ENCODE measurements at regions of chr17 and their contacts with region 1.

Region 1: GRCh38 chr17:55527540-55528118 is 16.4 kb upstream of the SMIM36 start:
- DNase-seq: no peak
- ATAC-seq: peak; percentile 82 to 85

Region 2: GRCh38 chr17:54932711-54933110 is 594.9 kb before region 1 on chr17:
- intact Hi-C with region 1: no loop called
- DNase-seq: no peak
- ATAC-seq: no peak

Region 3: DNA sequence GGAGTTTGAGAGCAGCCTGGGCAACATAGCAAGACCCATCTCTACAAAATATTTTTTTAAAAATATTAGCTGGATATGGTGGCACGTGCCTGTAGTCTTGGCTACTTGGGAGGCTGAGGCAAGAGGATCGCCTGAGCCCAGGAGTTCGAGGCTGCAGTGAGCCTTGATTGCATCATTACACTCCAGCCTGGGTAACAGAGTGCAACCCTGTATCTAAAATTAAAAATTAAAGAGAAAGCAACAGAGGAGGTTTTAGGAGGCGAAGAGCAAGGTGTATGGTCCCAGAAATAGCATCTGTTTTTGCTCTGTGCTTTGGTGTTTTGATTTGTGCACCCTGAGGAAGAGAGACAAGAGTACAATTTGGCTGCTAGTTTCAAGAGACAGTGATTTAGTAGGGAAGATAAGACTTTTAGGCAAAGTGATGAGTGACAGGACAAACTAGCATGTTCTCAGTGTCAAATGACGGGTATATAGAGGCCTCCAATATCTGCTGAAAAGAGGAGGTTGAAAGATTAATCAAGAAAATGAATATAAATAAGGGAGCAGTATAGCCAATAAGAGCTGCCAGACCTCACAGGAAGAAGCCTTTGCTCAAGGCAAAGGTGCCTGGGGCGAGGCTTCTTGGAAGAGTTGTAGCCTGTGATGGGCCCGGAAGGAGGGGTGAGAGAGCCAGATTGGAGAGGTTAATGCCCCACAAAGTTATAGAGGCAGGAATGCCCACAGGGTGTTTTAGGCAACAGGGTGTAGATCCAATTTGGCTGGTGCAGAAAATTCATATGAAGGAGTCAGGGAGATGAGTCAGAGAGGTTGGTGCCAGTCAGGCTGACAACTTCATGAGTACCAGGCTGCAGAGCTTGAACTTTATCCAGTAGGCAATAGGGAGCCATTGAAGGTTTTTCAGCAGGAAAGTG is 251.5 kb before region 1 on chr17:
- intact Hi-C with region 1: no loop called
- DNase-seq: no peak
- ATAC-seq: peak in 1 of 2 donors; percentile 85

Region 4: DNA sequence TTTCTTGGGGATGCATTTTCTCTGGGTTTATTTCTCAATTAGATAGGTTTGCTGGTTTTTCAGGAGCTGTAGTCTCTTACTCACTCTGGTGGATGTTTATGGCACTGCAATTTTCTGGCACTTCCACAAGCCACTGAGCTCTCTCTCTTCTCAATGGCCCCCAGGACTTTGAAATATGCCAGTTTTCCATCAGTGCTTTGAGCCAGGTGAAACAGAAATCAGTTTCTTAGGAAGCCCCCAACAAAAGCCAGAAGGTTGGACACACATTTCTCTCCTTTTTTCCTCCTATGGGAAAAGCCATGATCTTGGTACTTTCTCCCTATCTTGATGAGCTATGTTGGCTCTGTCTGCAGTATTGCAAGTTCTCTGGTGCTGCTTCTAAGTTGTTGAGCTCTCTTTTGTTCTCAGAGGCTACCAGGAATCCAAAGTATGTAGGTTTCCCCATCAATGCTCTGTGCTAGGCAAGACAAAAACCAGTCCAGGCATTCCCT is 74.3 kb after region 1 on chr17:
- intact Hi-C with region 1: loop called in 1 of 2 experiments (anchors 5 kb)
- DNase-seq: no peak
- ATAC-seq: no peak

Region 5: DNA sequence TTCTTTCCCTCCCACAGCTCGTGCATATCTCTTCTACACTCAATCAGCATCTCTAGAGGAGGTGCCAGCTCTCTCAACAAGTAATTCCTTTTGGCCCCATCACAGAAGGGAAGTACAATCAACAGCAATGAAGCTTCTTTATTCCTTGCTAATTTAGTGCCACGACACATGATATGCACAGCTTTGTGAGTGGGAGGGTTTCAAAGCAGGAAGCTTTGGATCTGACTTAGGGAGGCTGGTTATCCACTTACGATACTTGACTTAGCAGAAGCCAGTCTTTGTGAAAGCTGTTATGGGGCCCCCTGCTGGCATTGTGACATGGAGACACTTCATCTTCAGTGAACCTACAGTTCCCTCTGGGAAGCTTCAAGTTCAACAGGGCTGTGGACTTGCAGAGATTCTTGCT is 114.0 kb after region 1 on chr17:
- intact Hi-C with region 1: loop called in 1 of 2 experiments (anchors 2 kb)
- DNase-seq: peak; percentile 84
- ATAC-seq: peak; percentile 82 to 87

Region 6: GRCh38 chr17:55717898-55718735 is 190.5 kb after region 1 on chr17:
- intact Hi-C with region 1: loop called in 1 of 2 experiments (anchors 2 kb)
- DNase-seq: peak; percentile 86
- ATAC-seq: peak in 1 of 2 donors; percentile 50

Region 7: GRCh38 chr17:55770148-55770870 is 242.7 kb after region 1 on chr17:
- intact Hi-C with region 1: loop called (anchors 2 to 5 kb)
- DNase-seq: no peak
- ATAC-seq: peak; percentile 71 to 77

Region 8: GRCh38 chr17:55825213-55825612 is 297.6 kb after region 1 on chr17:
- intact Hi-C with region 1: loop called (anchors 2 to 5 kb)
- DNase-seq: no peak
- ATAC-seq: no peak

Region 9: DNA sequence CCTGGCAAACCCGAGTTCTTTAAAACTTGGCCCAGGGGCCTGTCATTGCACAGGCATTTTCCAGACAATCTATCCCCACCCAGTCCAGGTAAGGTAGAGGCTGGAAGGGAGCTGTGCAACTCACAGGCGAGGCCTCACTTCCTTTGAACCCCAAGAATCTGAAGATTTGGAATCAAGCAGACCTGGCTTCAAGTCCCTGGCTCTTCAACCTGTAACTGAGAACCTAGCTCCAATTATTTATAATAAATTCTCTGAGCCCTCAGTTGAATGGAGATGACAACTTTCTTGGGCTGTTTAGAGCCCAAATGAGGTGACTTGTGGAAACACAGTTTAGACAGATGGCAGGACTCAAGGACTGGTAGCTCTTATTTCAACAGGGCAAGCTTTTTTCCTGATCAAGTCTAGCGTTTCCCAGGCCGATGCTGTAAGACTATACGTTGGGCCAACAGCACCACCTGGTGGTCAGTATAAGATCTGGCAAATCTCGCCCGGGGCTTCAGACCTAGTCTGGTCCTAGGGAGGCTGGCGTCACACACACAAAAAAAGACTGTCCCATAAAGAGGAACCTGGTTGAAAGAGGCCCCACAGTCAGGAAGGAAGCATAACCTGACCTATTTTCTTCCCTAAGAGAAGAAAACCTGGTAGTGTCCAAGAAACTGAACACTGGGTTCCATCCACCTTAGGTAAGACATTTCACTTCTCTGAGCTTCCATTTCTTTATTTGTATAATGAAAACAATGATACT is 1188.2 kb after region 1 on chr17:
- intact Hi-C with region 1: loop called in 1 of 2 experiments (anchors 10 kb)
- DNase-seq: peak; percentile 82
- ATAC-seq: peak; percentile 90 to 92